Right ventricle myocardium inferior (tissue), 1 donor: ENCODE measurements at regions of chr3 and their contacts with region 1.

Region 1: DNA sequence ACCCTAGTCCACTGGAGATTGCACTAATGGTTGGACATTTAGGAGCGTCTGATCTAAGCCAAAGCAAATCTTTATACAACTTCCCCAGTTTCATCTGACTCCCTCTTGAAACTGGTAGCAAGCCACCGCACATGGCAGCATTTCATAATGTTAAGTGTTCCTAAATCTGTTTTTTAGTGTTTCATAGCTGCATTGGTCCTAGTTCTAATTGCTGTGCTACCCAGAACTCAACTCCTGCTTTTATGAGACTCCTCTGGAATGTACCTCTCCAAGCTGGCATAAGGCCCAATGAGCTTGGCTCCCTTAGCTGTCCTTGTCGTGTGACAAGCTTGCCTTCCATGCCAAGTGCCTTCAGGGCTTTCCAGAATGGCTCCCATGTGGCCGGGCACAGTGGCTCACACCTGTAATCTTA is 65.3 kb upstream of the FLNB start:
- DNase-seq: no peak
- ATAC-seq: peak; percentile 73

Region 2: DNA sequence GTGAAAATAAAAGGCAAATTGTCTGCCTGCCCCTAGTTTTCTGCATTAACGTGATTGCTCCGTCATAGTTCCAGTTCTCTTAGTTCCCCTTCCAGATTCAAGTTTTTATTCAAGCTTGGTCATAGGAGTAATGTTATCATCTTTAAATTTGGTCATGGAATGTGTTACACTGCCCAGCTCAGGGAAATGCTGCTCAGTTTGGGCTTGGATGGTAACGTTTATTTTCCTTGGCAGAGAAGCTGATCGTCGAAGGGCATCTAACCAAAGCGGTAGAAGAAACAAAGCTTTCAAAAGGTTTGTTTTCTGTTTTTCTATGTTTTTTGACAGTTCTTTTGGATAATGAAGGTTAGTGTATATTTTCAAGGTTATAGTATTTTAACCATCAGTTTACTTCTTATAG is 53.1 kb before region 1 on chr3:
- intact Hi-C with region 1: loop called (anchors 5 kb)
- DNase-seq: no peak
- ATAC-seq: peak; percentile 72

Region 3: GRCh38 chr3:57927916-57928315 is 15.0 kb before region 1 on chr3:
- intact Hi-C with region 1: loop called (anchors 2 kb)
- DNase-seq: no peak
- ATAC-seq: no peak

Region 4: GRCh38 chr3:58151637-58152036 is 208.8 kb after region 1 on chr3:
- intact Hi-C with region 1: no loop called
- DNase-seq: peak; percentile 88
- ATAC-seq: peak; percentile 92